Right ventricle myocardium inferior (tissue), 1 donor: ENCODE measurements at regions of chr2 and their contacts with region 1.

Region 1: DNA sequence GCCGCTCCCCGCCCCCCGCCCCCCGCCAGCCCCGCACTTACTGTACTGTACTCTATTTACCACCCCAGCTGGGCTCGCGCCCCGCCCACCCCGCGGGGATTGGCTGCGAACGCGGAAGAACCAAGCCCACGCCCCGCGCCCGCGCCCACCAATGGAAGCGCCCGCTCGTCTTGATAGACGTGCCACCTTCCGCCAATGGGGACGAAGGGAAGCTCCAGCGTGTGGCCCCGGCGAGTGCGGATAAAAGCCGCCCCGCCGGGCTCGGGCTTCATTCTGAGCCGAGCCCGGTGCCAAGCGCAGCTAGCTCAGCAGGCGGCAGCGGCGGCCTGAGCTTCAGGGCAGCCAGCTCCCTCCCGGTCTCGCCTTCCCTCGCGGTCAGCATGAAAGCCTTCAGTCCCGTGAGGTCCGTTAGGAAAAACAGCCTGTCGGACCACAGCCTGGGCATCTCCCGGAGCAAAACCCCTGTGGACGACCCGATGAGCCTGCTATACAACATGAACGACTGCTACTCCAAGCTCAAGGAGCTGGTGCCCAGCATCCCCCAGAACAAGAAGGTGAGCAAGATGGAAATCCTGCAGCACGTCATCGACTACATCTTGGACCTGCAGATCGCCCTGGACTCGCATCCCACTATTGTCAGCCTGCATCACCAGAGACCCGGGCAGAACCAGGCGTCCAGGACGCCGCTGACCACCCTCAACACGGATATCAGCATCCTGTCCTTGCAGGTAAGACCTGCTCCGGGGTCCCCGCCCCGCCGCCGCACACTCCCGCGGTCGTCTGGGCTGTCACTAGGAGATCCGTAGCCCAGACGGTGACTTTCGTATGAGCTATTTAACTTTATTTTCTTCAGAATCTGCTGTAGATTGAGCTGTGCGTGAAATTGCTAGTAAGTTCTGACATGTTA is at the start of gene ID2:
- DNase-seq: peak; percentile 100
- ATAC-seq: peak; percentile 87
- total RNA-seq, gene ID2: 31.3 TPM

Region 2: DNA sequence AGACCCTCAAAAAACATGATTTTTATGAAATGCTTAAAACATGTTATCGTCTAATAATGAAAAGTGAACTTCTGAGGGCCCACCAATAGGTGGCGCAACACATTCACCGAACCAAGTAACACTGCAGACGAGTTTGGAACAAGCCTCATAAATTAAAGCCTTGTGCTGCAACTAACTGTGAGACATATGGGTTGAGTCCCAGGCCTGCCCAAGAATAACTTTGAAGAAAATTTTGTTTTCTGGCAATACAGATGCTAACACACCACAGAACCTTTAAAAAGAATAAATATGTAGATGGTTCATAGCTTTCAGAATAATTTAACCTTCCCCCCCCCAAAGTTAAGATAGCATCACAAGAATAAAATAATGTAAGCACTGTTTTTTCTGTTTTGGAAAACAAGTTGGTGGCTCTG is 1479.0 kb before region 1 on chr2:
- intact Hi-C with region 1: loop called (anchors 5 kb)
- DNase-seq: no peak
- ATAC-seq: no peak

Region 3: GRCh38 chr2:8004250-8004681 is 677.8 kb before region 1 on chr2:
- intact Hi-C with region 1: loop called (anchors 5 kb)
- DNase-seq: no peak
- ATAC-seq: peak; percentile 84

Region 4: DNA sequence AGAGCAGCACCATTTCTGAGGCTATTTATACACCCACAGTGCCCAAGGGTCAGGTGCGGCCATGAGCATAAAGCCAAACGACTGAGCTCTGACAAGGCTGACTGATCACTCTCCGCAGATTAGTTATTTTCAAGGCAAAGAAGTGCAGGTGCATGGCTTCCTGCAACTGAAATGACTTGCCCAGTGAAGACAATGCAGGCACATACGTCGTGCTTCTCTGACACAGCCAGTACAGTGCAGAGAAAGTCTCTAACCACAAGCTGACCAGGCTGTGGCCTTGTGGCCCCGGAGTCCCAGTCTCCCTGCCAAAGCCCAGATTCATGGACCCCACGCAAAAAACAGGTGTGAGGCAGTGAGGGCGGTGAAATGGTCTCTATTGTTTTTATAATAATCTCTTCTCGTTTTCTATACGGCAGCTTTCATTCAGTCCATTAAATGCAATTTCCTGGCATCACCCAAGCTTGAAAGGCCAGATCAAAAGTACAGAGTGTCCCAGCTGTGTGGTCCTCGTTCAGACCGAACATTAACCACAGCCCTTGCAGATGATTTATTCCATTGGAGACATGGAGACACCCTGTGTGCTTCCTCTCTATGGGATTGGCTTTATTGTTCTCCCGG is 447.2 kb before region 1 on chr2:
- intact Hi-C with region 1: loop called (anchors 5 kb)
- DNase-seq: no peak
- ATAC-seq: no peak

Region 5: DNA sequence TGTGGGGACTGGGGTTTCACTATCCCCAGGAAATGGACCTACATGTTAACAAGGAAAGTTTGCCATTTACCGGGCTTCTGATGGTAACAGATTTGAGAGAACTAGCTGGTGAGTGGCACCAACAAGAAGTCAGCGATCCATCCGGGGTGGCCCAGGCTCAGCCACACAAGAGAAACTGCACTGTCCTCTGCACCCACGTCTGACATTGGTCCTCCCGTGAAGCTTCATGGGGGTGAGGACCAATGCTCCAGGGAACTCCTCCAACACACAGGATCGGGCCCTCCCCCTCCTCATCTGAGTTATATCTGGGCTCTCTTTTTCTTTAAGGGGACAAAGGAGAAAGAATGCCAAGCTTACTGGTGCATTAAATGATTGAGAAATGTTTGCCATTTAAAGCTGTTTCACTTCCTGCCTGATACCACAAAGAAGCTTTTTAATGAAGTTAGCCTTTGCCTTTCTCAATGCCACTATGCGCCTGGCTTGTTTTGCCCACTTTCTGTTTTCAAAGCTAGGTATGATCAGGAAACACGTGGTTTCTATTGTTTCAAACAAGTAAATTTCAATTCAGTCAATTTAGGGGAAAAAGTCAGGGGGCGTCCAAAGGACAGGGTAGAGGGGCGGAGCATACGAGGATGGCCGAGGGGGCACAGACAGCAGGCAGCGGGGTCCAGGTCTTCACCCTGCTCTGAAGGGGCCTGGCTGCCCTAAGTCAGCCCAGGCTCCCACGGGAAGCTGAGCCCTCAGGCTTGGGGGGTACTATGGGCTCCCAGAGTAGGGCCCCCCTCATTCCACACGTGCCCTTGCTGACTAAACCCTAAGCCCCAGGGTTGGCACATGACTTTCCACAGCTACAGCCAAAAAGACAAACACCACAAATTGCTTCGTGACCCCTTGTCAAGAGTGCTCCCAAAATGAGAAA is 204.2 kb before region 1 on chr2:
- intact Hi-C with region 1: loop called (anchors 5 kb)
- DNase-seq: peak; percentile 64
- ATAC-seq: peak; percentile 10